Activated CD4-positive, alpha-beta T cell treated with anti-CD3 and anti-CD28 coated beads, Interleukin-2, amount 10 ng/mL, durations not matched to agents 24 days and 14 days (primary cell): ENCODE measurements at regions of chr11 and their contacts with region 1.

Region 1: GRCh38 chr11:107858217-107859070 is at the start of gene SLC35F2:
- DNase-seq: peak; percentile 92
- H3K4me3 Mint-ChIP-seq: peak within 1 kb of the TSS; percentile 90
- H3K27ac Mint-ChIP-seq: peak within 1 kb of the TSS; percentile 93
- H3K4me1 Mint-ChIP-seq: peaks cover 25% of the 10 kb centered on the region
- H3K27me3 Mint-ChIP-seq: peaks cover 4% of the 10 kb centered on the region
- total RNA-seq, gene SLC35F2: 31.9 and 35.1 TPM in 2 replicates

Region 2: GRCh38 chr11:107590460-107591377 is 267.7 kb before region 1 on chr11 and contains the start of gene ELMOD1:
- intact Hi-C with region 1: loop called (anchors 5 kb)
- DNase-seq: peak; percentile 74
- H3K4me3 Mint-ChIP-seq: peak within 1 kb of the TSS; percentile 81
- H3K27ac Mint-ChIP-seq: peak within 1 kb of the TSS; percentile 67
- H3K4me1 Mint-ChIP-seq: peaks cover 22% of the 10 kb centered on the region
- H3K27me3 Mint-ChIP-seq: peaks cover 81% of the 10 kb centered on the region
- total RNA-seq, gene ELMOD1: not detected in 2 replicates

Region 3: DNA sequence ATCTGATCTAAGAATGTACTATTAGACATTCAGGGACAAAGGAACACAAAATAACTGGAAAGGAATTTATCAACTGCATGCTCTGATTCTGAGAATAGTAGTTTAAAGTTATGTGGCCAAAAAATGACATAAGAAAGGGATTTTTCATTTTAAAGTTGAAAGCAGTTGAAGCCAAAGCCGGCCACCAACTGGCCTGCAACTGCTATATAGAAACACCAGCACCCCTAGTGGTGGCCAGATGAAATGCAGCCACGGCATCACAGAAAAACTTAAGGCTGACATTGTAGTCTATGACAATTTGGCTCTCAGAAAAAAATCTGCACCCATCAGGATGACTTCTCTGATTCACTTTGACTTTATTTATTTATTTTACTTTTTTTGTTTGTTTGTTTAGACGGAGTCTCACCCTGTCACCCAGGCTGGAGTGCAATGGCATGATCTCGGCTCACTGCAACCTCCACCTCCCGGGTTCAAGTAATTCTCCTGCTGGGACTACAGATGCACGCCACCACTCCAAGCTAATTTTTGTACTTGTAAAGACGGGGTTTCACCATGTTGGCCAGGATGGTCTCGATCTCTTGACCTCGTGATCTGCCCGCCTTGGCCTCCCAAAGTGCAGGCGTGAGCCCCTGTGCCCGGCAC is 59.1 kb before region 1 on chr11:
- intact Hi-C with region 1: loop called (anchors 2 kb)
- DNase-seq: peak; percentile 88
- H3K4me3 Mint-ChIP-seq: no peak overlapping the region
- H3K27ac Mint-ChIP-seq: no peak overlapping the region
- H3K4me1 Mint-ChIP-seq: peaks cover 2% of the 10 kb centered on the region
- H3K27me3 Mint-ChIP-seq: no peaks in the 10 kb centered on the region

Region 4: GRCh38 chr11:107840129-107840484 is 18.3 kb before region 1 on chr11:
- intact Hi-C with region 1: loop called (anchors 1 kb)
- DNase-seq: no peak
- H3K4me3 Mint-ChIP-seq: peak overlapping the region; percentile 77
- H3K27ac Mint-ChIP-seq: peak overlapping the region; percentile 91
- H3K4me1 Mint-ChIP-seq: peaks cover 52% of the 10 kb centered on the region
- H3K27me3 Mint-ChIP-seq: no peaks in the 10 kb centered on the region

Region 5: DNA sequence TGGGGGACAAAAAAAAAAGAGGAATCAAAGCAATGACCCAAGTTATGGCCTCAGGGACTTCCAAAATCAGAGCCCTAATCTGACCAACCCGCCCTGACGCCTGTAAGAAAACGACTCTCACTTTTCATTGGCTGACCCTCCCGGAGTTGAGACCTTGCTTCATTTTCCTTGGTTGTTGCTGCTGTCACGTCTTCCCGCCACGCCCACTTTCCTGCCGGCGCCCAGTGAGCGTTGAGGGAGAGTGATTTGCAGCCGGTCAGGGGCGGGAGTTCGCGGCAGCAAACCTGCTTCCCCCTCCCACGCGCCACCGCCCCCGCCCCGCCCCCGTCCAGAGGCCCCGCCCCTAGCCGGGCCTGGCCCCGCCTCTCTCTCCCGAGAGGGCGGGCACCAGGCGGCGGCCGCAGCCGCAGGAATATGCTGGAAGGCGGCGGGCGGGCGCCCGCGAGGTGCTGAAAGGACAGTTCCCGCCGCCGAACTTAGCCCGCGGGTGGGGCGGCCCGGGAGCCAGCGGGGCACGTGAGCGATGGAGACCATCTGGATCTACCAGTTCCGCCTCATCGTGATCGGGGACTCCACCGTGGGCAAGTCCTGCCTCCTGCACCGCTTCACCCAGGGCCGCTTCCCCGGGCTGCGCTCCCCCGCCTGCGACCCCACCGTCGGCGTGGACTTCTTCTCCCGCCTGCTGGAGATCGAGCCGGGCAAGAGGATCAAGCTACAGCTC is 69.8 kb after region 1 on chr11 and contains the start of gene RAB39A:
- intact Hi-C with region 1: loop called (anchors 5 kb)
- DNase-seq: peak; percentile 90
- H3K4me3 Mint-ChIP-seq: peak within 1 kb of the TSS; percentile 77
- H3K27ac Mint-ChIP-seq: peak within 1 kb of the TSS; percentile 45
- H3K4me1 Mint-ChIP-seq: peaks cover 6% of the 10 kb centered on the region
- H3K27me3 Mint-ChIP-seq: peaks cover 29% of the 10 kb centered on the region
- total RNA-seq, gene RAB39A: not detected in 2 replicates

Region 6: DNA sequence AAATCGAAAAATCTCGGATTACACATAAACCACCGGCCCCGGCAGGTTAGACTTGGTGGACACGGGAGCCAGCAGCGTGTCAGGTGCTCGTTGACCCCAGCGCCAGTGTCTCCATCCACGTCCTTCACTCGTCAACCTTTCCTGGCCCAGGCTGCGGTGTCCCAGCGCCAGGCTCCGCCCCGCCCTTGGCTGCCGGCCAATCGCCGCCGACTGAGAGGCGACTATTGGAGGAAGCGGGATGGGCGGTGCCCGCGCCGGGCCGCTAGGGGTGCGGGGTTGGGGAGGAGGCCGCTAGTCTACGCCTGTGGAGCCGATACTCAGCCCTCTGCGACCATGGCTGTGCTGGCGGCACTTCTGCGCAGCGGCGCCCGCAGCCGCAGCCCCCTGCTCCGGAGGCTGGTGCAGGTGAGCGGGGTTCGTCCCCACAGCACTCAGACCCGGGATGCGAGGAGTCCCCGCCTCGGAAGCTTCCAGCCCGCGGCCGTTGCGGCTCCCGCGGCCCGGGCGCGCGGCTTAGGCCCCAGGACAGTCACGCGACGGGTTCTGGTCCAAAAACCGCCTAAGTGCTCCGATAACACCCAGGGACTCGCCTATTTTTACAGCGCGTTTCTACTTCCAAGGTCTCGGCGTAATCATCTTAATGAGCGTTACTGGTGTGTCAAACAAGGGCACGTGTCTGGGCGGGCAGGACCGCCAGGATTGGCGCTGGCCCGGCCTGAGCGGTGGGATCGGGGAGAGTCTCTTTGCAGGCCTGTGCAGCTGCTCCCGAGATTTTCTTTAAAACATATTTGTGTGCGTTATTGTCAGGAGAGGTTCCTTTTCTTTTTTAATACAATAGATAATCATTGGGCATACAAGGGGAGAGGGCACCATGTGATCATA is 263.1 kb after region 1 on chr11 and contains the start of gene ACAT1:
- intact Hi-C with region 1: loop called (anchors 1 kb)
- DNase-seq: peak; percentile 99
- H3K4me3 Mint-ChIP-seq: peak within 1 kb of the TSS; percentile 87
- H3K27ac Mint-ChIP-seq: peak within 1 kb of the TSS; percentile 84
- H3K4me1 Mint-ChIP-seq: peaks cover 33% of the 10 kb centered on the region
- H3K27me3 Mint-ChIP-seq: no peaks in the 10 kb centered on the region
- total RNA-seq, gene ACAT1: 65.0 and 65.9 TPM in 2 replicates